ENCODE measurements at regions of chr5 and their contacts with region 1.

Region 1: GRCh38 chr5:171264843-171265242 is 44.2 kb upstream of the TLX3 start:
- DNase-seq: peak in 2 of 3 donors; percentile 57 to 71
- H3K4me3 ChIP-seq: no peak overlapping the region
- H3K27ac ChIP-seq: no peak overlapping the region
- H3K4me1 ChIP-seq: peaks cover 0 to 8% (median 2%) of the 10 kb centered on the region in 4 experiments
- H3K27me3 ChIP-seq: peaks cover 0 to 2% (median 0%) of the 10 kb centered on the region in 5 experiments

Region 2: GRCh38 chr5:171137768-171138525 is 126.9 kb before region 1 on chr5:
- CTCF ChIA-PET with region 1: no interaction called
- POLR2A ChIA-PET with region 1: no interaction called
- DNase-seq: no peak
- H3K4me3 ChIP-seq: no peak overlapping the region
- H3K27ac ChIP-seq: no peak overlapping the region
- H3K4me1 ChIP-seq: no peaks in the 10 kb centered on the region
- H3K27me3 ChIP-seq: no peaks in the 10 kb centered on the region

Region 3: GRCh38 chr5:171207256-171207847 is 57.5 kb before region 1 on chr5:
- CTCF ChIA-PET with region 1: interaction called, 11 read pairs
- POLR2A ChIA-PET with region 1: no interaction called
- DNase-seq: peak; percentile 65 to 73 (median 68)
- H3K4me3 ChIP-seq: no peak overlapping the region
- H3K27ac ChIP-seq: no peak overlapping the region
- H3K4me1 ChIP-seq: peaks cover 0 to 2% (median 0%) of the 10 kb centered on the region in 4 experiments
- H3K27me3 ChIP-seq: no peaks in the 10 kb centered on the region

Region 4: DNA sequence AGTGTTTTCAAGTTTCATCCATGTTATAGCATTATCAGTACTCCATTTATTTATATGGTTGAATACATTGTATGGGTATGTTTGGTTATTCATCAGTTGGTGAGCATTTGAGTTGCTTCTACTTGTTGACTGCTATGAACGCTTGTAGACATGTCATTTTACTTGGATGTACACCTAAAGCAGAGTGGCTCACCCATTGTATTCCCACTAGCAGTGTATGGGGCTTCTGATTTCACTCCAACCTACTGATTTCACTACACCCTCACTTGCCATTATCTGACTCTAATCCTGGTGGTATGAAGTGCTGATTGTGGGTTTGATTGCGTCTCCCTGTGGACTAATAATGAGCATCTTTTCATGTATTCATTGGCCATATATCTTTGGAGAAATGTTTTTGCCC is 132.3 kb after region 1 on chr5:
- CTCF ChIA-PET with region 1: no interaction called
- POLR2A ChIA-PET with region 1: no interaction called
- DNase-seq: no peak
- H3K4me3 ChIP-seq: no peak overlapping the region
- H3K27ac ChIP-seq: no peak overlapping the region
- H3K4me1 ChIP-seq: no peaks in the 10 kb centered on the region
- H3K27me3 ChIP-seq: no peaks in the 10 kb centered on the region

Measured in common myeloid progenitor, CD34-positive (primary cell).